Mammary epithelial cell (primary cell): ENCODE measurements at regions of chr21 and their contacts with region 1.

Region 1: DNA sequence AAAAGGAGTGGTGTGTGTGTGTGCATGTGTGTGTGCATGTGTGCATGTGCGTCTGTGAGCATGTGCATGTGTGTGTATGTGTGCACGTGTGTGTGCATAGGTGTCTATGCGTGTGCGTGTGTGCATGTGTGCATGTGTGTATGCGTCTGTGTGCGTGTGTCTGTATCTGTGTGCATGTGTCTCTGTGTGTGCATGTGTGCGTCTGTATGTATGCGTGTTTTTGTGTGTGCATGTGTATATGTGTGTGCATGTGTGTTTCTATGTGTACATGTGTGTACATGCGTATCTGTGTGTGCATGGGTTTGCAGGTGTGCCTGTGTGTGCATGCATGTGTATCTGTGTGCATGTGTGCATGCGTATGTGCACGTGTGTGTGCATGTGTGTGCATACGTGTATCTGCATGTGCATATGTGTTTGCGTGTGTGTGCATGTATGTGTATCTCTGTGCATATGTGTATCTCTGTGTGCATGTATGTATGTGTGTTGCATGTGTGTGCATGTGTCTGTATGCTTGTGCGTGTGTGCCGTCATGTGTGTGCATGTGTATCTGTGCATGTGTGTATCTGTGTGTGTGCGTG is 77.9 kb downstream of the TCP10L start:
- DNase-seq: no peak
- H3K4me3 ChIP-seq: no peak overlapping the region
- H3K27ac ChIP-seq: no peak overlapping the region
- H3K4me1 ChIP-seq: no peaks in the 10 kb centered on the region
- H3K27me3 ChIP-seq: no peaks in the 10 kb centered on the region
- CTCF ChIP-seq: no peak

Region 2: GRCh38 chr21:32463889-32464300 is 43.5 kb before region 1 on chr21:
- CTCF ChIA-PET with region 1: no interaction called
- dilution Hi-C with region 1: loop called (anchors 5 kb)
- in situ Hi-C with region 1: no loop called
- intact Hi-C with region 1: no loop called
- DNase-seq: peak; percentile 54
- H3K4me3 ChIP-seq: no peak overlapping the region
- H3K27ac ChIP-seq: peak overlapping the region; percentile 70
- H3K4me1 ChIP-seq: peaks cover 22% of the 10 kb centered on the region
- H3K27me3 ChIP-seq: no peaks in the 10 kb centered on the region
- CTCF ChIP-seq: no peak